Activated CD4-positive, alpha-beta memory T cell treated with anti-CD3 and anti-CD28 coated beads, Interleukin-2, amount 10 ng/mL, durations not matched to agents 7 days and 5 days (primary cell): ENCODE measurements at regions of chr1 and their contacts with region 1.

Region 1: GRCh38 chr1:115052454-115053083 is 22.9 kb downstream of the TSHB start:
- DNase-seq: peak; percentile 62
- H3K4me3 Mint-ChIP-seq: no peak overlapping the region
- H3K27ac Mint-ChIP-seq: no peak overlapping the region
- H3K4me1 Mint-ChIP-seq: peaks cover 11% of the 10 kb centered on the region
- H3K27me3 Mint-ChIP-seq: peaks cover 4% of the 10 kb centered on the region

Region 2: DNA sequence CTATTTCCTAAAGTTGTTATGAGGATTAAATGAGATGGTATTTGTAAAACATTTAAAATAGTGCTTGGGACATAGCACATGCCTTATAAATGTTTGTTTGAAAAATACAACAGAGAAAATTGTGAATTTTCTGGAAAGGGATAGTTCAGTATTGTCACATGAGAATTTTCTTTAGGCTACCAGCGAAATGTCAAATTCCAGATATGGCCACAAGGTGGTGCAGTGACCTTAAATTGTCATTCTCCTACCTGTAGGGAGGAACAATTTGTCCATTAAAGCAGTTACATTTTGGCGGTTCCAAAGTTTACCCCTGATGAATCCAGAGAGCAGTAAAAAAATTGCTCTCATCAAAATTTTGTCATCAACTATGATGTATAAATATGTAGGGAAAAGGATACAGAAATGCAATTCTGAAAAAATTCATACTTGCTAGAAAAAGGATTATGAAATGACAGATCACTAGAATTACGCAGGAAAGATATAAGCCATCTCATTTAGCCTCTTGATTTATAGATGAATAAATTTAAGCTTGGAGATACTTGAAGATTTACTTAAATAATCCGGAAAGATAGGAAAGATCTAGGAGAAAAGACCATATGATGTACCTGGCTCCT is 73.2 kb before region 1 on chr1:
- CTCF ChIA-PET with region 1: interaction called, 11 read pairs
- POLR2A ChIA-PET with region 1: no interaction called
- DNase-seq: peak; percentile 65
- H3K4me3 Mint-ChIP-seq: no peak overlapping the region
- H3K27ac Mint-ChIP-seq: no peak overlapping the region
- H3K4me1 Mint-ChIP-seq: no peaks in the 10 kb centered on the region
- H3K27me3 Mint-ChIP-seq: peaks cover 36% of the 10 kb centered on the region

Region 3: DNA sequence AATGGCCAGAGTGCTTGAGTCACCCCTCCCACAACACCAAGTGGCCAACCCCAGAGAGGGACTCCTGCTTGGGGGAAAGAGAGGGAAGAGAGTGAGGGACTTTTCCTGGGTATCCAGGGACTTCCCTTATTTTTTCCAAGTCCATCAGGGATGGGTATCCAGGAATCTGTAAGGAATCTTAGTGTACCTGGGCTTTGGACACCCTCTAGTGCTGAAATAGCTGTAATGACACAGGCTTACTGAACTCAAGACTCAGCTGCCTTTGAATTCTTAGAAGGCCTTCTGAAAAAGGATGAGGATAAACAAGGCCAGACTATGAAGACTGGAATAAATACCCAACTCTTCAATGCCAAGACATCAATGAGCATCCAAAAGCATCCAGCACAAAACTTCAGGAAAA is 10.9 kb before region 1 on chr1:
- CTCF ChIA-PET with region 1: interaction called, 11 read pairs
- POLR2A ChIA-PET with region 1: no interaction called
- DNase-seq: no peak
- H3K4me3 Mint-ChIP-seq: no peak overlapping the region
- H3K27ac Mint-ChIP-seq: no peak overlapping the region
- H3K4me1 Mint-ChIP-seq: peaks cover 1% of the 10 kb centered on the region
- H3K27me3 Mint-ChIP-seq: peaks cover 3% of the 10 kb centered on the region

Region 4: DNA sequence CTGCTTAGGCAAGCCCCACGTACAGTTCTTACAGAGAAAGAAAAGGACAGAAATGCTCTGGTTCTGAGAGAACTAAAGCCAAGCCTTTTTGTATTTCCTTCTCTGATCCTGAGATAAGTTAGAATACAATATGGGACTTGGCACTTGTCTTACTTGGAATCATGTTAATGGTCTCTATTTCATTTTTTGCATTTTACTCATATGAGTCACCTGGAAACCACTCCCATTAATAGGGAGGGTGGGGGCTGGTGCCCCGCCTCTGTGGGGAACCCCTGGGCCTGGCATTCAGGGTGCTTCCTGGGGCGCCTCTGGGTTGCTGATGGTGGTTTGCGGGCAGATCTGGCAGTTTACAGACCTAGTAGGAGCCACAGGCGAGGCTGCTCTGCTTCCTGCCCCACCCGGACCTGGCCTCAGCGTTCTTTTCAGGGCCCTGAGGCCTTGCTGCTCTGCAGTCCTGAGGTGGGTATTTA is 10.0 kb after region 1 on chr1:
- CTCF ChIA-PET with region 1: interaction called, 12 read pairs
- POLR2A ChIA-PET with region 1: no interaction called
- DNase-seq: peak; percentile 97
- H3K4me3 Mint-ChIP-seq: peak overlapping the region; percentile 45
- H3K27ac Mint-ChIP-seq: peak overlapping the region; percentile 96
- H3K4me1 Mint-ChIP-seq: peaks cover 44% of the 10 kb centered on the region
- H3K27me3 Mint-ChIP-seq: no peaks in the 10 kb centered on the region

Region 5: DNA sequence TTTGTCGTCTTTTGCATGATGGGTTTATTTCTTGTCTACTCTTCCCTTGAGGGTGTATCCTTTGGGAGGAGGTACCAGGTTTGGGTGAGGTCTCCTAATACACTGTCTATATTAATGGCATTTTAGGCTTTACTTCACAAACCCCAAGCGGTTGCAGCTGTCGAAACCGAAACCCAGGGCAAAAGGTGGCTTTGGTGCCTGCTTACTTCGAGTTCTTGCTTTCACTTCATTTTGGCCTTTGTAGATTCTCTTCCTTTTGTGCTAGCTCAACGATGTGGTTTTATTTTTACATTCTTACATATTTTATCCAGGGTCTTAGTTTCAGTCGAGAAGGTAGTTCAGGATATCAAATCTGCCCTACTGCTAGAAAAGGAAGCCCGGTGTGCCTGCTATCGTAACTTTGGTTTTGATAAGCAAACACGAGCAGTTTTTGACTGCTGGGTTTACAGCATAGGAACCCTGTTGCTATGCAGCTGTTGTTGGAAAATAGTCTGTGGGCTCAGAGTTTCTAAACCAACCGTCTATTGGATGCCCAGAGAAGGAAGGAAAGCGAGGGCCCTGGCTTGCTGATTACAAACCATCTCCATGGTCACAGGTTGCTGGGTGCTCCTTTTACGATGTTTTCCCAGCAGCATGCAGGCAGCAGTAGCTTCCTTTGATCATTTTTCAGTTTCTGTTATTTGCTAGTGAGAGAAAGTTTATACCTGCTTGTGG is 46.6 kb after region 1 on chr1:
- CTCF ChIA-PET with region 1: interaction called, 10 read pairs
- POLR2A ChIA-PET with region 1: interaction called, 9 read pairs
- DNase-seq: peak; percentile 79
- H3K4me3 Mint-ChIP-seq: peak overlapping the region; percentile 82
- H3K27ac Mint-ChIP-seq: peak overlapping the region; percentile 98
- H3K4me1 Mint-ChIP-seq: peaks cover 33% of the 10 kb centered on the region
- H3K27me3 Mint-ChIP-seq: peaks cover 10% of the 10 kb centered on the region

Region 6: DNA sequence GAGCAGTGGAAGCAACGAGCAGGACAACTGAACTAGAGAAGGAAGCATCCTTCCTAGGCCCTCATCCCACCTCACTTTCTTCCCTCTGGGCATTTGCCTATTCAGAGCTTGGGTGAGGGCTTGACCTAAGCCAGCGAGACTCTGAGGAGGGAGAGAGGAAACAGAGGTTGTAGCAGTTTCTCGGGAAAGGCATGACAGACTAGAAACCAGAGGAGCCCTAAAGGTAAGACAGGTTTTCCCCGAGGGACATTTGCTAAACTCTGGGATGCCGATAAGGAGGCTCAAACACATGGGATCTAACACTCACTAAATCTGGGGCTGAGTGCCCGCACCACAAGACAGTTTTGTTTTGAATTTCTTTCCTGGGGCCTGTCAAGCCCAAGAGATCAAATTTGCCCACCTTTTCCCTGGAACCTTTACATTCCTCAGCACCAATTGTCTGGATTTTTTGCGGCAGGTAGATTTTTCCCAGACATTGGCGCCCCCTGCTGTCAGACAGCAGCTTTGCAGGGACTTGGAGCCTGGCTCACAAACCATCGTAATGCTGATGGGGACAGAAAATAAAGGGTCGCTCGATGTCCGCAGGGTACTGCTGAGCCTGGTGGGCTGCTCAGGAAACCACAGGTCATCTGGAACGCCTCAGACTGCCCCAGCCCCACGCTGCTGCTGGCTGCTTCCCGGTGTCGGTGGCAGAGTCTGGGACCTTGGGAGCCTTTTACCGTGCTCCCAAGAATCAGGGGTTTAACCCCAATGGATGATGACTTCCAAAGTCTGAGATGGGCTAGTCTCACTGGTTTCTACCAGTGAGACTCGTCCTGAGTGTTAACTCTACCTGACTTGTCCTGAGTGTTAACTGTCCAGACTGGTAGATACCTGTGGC is 60.2 kb after region 1 on chr1:
- CTCF ChIA-PET with region 1: interaction called, 34 read pairs
- POLR2A ChIA-PET with region 1: no interaction called
- DNase-seq: peak; percentile 57
- H3K4me3 Mint-ChIP-seq: no peak overlapping the region
- H3K27ac Mint-ChIP-seq: no peak overlapping the region
- H3K4me1 Mint-ChIP-seq: peaks cover 3% of the 10 kb centered on the region
- H3K27me3 Mint-ChIP-seq: peaks cover 2% of the 10 kb centered on the region

Region 7: GRCh38 chr1:115347282-115347681 is 294.7 kb after region 1 on chr1:
- CTCF ChIA-PET with region 1: no interaction called
- POLR2A ChIA-PET with region 1: no interaction called
- DNase-seq: no peak
- H3K4me3 Mint-ChIP-seq: no peak overlapping the region
- H3K27ac Mint-ChIP-seq: no peak overlapping the region
- H3K4me1 Mint-ChIP-seq: no peaks in the 10 kb centered on the region
- H3K27me3 Mint-ChIP-seq: peaks cover 8% of the 10 kb centered on the region